ENCODE measurements at regions of chr7 and their contacts with region 1.

Region 1: DNA sequence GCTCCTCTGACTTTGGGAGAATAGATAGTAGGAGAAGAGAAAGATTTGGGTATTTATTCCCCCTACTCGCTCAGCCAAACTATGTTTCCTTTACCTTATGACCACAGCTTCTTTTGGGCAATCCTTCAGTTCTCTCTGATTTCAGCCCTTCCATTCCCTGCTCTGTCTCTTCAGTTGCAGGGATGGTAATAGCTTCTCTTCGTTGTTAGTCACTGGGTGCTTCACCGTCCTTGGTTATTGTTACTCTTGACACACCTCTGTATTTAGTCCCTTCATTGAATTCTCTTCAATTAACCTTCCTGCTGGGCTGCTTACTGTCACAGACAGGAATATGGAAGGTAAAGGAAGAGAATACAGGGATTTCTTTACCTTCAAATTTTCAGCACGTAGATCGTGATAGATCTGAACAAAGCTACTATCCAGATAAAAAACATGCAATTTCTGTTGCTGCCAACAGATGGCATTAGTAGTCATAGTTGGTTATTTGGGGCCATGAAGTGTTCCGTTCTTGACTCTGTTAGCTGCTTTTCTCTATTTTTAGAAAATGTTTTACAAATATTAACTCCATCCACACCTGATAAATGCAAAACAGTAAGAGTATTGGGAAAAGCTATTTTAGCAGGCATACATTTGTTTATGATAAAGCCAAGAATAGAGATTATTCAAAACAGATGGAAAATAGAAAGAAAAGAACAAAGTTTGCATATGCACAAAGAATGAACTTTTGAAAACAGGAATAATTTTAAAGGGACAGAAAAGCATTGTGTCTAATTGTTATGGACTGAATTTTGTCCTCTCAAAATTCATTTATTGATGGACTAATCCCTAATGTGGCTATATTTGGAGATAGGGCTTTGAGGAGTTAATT is 14.0 kb upstream of the PTTG1IP2 start:
- DNase-seq: no peak
- ATAC-seq: peak; percentile 80 to 92 (median 90)
- H3K4me3 ChIP-seq: no peak overlapping the region
- H3K27ac ChIP-seq: no peak overlapping the region
- H3K4me1 ChIP-seq: peaks cover 8 to 28% (median 10%) of the 10 kb centered on the region in 3 donors
- H3K27me3 ChIP-seq: no peaks in the 10 kb centered on the region
- CTCF ChIP-seq: peak; percentile 6 to 49 (median 43)

Region 2: DNA sequence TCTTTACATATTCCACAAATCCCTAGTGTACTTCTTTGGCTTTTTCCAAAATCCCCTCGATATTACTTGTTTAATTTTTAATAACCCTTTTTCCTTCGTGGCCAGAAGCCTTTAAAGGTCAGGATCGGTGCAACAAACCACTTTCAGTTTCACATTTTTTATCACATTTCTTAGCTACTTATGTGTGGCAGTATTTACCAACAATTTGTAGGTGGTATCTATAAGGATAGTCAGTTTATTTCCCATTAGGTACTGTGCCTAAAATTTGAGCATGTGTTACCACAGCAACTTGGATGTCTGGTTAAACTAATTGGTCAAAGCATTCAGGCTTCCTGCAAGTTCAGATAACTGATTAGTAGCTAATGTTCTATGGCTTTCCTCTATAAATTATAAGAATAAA is 245.6 kb after region 1 on chr7:
- intact Hi-C with region 1: no loop called
- DNase-seq: no peak
- ATAC-seq: peak in 3 of 4 donors; percentile 29 to 65 (median 61)
- H3K4me3 ChIP-seq: peak overlapping the region in 2 of 4 donors; percentile 15 to 31
- H3K27ac ChIP-seq: peak overlapping the region in 2 of 4 donors; percentile 48 to 50
- H3K4me1 ChIP-seq: peaks cover 0 to 9% (median 5%) of the 10 kb centered on the region in 3 donors
- H3K27me3 ChIP-seq: no peaks in the 10 kb centered on the region
- CTCF ChIP-seq: no peak

Region 3: GRCh38 chr7:91046322-91047089 is 591.1 kb after region 1 on chr7:
- intact Hi-C with region 1: loop called in 1 of 3 experiments (anchors 10 kb)
- DNase-seq: no peak
- ATAC-seq: no peak
- H3K4me3 ChIP-seq: no peak overlapping the region
- H3K27ac ChIP-seq: no peak overlapping the region
- H3K4me1 ChIP-seq: no peaks in the 10 kb centered on the region
- H3K27me3 ChIP-seq: no peaks in the 10 kb centered on the region
- CTCF ChIP-seq: peak in 2 of 4 donors; percentile 6 to 9

Measured in pancreas (tissue), 10 donors.